PC-3 (cell line): ENCODE measurements at regions of chr2 and their contacts with region 1.

Region 1: DNA sequence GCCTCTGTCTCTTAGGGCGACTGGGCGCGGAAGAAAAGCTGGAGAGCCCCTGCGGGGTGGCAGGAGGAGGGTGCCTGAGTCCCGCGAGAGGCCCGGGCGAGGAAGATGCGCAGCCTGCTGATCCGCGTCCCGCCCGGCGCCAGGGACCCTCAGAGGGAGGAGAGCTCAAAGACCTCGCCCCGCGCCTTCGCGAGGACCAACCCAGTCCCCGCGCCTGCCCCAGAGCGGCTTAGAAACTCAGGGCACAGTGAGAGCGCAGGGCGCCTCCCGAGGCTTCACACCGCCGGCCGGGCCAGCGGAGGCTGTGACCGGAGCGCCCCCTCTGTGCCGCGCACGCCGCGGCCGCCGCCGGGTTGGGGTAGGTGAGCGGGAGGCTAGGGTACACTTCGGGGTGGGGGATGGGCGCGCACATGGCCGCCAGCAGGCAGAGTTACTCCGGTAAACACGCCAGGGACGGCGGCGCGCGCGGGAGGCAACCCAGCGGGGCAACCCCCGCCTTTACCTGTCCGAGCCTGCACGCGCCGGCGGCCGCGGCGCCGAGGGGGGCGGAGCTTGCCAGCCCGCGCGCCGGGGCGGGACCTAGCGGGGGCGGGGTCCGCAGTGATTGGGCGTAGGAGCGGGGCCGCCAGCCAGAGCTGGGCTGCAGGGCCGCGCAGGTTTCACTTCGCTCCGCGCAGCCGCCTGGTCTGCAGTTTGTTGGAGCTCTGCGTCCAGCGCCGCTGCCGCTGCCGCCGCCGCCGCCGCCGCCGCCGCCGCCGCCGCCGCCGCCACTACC is at the start of gene BCL2L11:
- DNase-seq: peak; percentile 95
- ATAC-seq: peak; percentile 67
- H3K4me3 ChIP-seq: peak within 1 kb of the TSS; percentile 91
- H3K27ac ChIP-seq: peak within 1 kb of the TSS; percentile 60
- H3K4me1 ChIP-seq: peaks cover 16% of the 10 kb centered on the region
- H3K27me3 ChIP-seq: no peaks in the 10 kb centered on the region
- CTCF ChIP-seq: peak; percentile 47
- total RNA-seq, gene BCL2L11: 11.3 and 24.6 TPM in 2 replicates

Region 2: GRCh38 chr2:110812726-110813645 is 307.5 kb before region 1 on chr2:
- CTCF ChIA-PET with region 1: no interaction called
- POLR2A ChIA-PET with region 1: interaction called, 5 read pairs
- intact Hi-C with region 1: loop called (anchors 2 kb)
- DNase-seq: no peak
- ATAC-seq: no peak
- H3K4me3 ChIP-seq: no peak overlapping the region
- H3K27ac ChIP-seq: no peak overlapping the region
- H3K4me1 ChIP-seq: peaks cover 2% of the 10 kb centered on the region; the same call in 1 of the 2 replicates
- H3K27me3 ChIP-seq: no peaks in the 10 kb centered on the region
- CTCF ChIP-seq: no peak

Region 3: GRCh38 chr2:111028727-111029126 is 91.7 kb before region 1 on chr2:
- CTCF ChIA-PET with region 1: interaction called, 3 read pairs
- POLR2A ChIA-PET with region 1: no interaction called
- intact Hi-C with region 1: loop called (anchors 1 kb)
- DNase-seq: peak; percentile 45
- ATAC-seq: peak; percentile 38; the same call in 1 of the 2 replicates
- H3K4me3 ChIP-seq: no peak overlapping the region
- H3K27ac ChIP-seq: no peak overlapping the region
- H3K4me1 ChIP-seq: peaks cover 44% of the 10 kb centered on the region
- H3K27me3 ChIP-seq: no peaks in the 10 kb centered on the region
- CTCF ChIP-seq: peak; percentile 78

Region 4: DNA sequence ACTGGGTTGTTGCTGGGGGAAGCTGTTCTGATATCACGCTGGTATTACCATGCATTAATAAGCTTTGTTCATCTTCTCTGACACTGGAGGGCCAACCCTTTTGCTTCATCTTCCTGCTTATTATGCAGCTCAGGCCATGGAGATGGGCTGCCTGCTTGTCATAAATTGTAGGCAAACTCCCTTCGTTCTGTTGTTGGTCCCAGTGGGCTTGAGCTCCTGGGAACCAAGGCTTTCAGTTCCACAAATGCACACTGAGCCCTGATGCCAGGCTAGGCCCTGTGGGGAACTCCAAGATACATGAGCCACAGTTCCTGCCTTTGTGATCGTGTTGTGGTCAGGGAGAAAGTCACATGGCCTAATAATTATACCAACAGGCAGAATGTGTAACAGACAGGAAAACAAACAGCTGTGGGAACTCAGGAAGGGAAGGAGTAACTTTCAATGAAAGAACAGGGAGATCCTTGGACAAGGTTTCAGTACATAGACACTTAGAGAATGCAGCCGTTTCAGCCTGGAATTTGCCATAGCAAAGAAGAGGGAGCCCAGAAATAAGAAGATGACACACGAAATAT is 48.8 kb before region 1 on chr2:
- CTCF ChIA-PET with region 1: no interaction called
- POLR2A ChIA-PET with region 1: interaction called, 6 read pairs
- intact Hi-C with region 1: loop called (anchors 2 kb)
- DNase-seq: peak; percentile 79
- ATAC-seq: peak; percentile 85
- H3K4me3 ChIP-seq: peak overlapping the region; percentile 29; the same call in 1 of the 2 replicates
- H3K27ac ChIP-seq: peak overlapping the region; percentile 93
- H3K4me1 ChIP-seq: peaks cover 42% of the 10 kb centered on the region
- H3K27me3 ChIP-seq: no peaks in the 10 kb centered on the region
- CTCF ChIP-seq: no peak

Region 5: DNA sequence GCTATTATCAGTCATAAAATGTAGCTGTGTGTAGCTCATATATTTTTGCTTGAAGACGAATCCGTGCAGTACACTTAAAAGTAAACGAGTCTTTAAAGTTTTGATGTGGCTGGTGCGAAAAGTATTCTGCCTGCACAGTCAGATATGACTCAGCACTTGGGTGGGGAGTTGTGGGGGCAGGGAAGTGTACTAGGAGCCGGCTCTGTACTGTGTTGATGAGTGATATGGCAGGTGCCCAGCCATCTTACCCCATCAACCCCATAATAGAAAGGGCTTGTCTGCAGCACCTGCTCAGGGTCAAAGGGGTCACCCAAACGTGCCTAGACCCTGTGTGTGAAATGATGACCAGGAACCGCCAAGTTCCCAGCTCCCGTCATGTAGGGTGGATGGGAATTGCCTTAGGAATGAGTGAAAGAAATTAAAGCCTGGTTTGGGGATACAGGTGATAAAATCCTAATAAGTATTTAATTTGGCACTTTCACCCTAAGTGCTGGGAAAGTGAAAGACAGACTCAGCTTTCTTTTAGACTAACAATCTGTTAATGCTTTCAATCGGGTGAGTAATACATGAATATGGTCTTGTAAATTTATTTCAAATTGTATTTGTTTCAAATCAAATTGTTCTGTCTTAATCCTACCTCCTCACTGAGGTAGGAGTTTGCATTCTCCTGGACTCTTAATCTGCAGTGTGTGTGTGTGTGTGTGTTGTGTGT is 48.2 kb after region 1 on chr2:
- CTCF ChIA-PET with region 1: no interaction called
- POLR2A ChIA-PET with region 1: interaction called, 14 read pairs
- intact Hi-C with region 1: no loop called
- DNase-seq: peak; percentile 94
- ATAC-seq: peak; percentile 96
- H3K4me3 ChIP-seq: no peak overlapping the region
- H3K27ac ChIP-seq: peak overlapping the region; percentile 43
- H3K4me1 ChIP-seq: peaks cover 31% of the 10 kb centered on the region
- H3K27me3 ChIP-seq: no peaks in the 10 kb centered on the region
- CTCF ChIP-seq: no peak

Region 6: GRCh38 chr2:111185638-111186022 is 65.2 kb after region 1 on chr2:
- CTCF ChIA-PET with region 1: no interaction called
- POLR2A ChIA-PET with region 1: no interaction called
- intact Hi-C with region 1: loop called (anchors 10 kb)
- DNase-seq: peak; percentile 68
- ATAC-seq: peak; percentile 97
- H3K4me3 ChIP-seq: no peak overlapping the region
- H3K27ac ChIP-seq: no peak overlapping the region
- H3K4me1 ChIP-seq: peaks cover 14% of the 10 kb centered on the region
- H3K27me3 ChIP-seq: no peaks in the 10 kb centered on the region
- CTCF ChIP-seq: no peak

Region 7: GRCh38 chr2:111227716-111228141 is 107.3 kb after region 1 on chr2:
- CTCF ChIA-PET with region 1: no interaction called
- POLR2A ChIA-PET with region 1: no interaction called
- intact Hi-C with region 1: no loop called
- DNase-seq: peak; percentile 37
- ATAC-seq: no peak
- H3K4me3 ChIP-seq: no peak overlapping the region
- H3K27ac ChIP-seq: no peak overlapping the region
- H3K4me1 ChIP-seq: no peaks in the 10 kb centered on the region
- H3K27me3 ChIP-seq: no peaks in the 10 kb centered on the region
- CTCF ChIP-seq: no peak

Region 8: GRCh38 chr2:111239107-111239506 is 118.7 kb after region 1 on chr2:
- CTCF ChIA-PET with region 1: no interaction called
- POLR2A ChIA-PET with region 1: no interaction called
- intact Hi-C with region 1: no loop called
- DNase-seq: no peak
- ATAC-seq: no peak
- H3K4me3 ChIP-seq: no peak overlapping the region
- H3K27ac ChIP-seq: no peak overlapping the region
- H3K4me1 ChIP-seq: no peaks in the 10 kb centered on the region
- H3K27me3 ChIP-seq: no peaks in the 10 kb centered on the region
- CTCF ChIP-seq: no peak

Region 9: GRCh38 chr2:111698743-111699554 is 578.5 kb after region 1 on chr2:
- CTCF ChIA-PET with region 1: no interaction called
- POLR2A ChIA-PET with region 1: no interaction called
- intact Hi-C with region 1: loop called (anchors 2 kb)
- DNase-seq: peak; percentile 98
- ATAC-seq: peak; percentile 97
- H3K4me3 ChIP-seq: peak overlapping the region; percentile 18; the same call in 1 of the 2 replicates
- H3K27ac ChIP-seq: peak overlapping the region; percentile 87
- H3K4me1 ChIP-seq: peaks cover 49% of the 10 kb centered on the region
- H3K27me3 ChIP-seq: no peaks in the 10 kb centered on the region
- CTCF ChIP-seq: peak; percentile 78

Region 10: DNA sequence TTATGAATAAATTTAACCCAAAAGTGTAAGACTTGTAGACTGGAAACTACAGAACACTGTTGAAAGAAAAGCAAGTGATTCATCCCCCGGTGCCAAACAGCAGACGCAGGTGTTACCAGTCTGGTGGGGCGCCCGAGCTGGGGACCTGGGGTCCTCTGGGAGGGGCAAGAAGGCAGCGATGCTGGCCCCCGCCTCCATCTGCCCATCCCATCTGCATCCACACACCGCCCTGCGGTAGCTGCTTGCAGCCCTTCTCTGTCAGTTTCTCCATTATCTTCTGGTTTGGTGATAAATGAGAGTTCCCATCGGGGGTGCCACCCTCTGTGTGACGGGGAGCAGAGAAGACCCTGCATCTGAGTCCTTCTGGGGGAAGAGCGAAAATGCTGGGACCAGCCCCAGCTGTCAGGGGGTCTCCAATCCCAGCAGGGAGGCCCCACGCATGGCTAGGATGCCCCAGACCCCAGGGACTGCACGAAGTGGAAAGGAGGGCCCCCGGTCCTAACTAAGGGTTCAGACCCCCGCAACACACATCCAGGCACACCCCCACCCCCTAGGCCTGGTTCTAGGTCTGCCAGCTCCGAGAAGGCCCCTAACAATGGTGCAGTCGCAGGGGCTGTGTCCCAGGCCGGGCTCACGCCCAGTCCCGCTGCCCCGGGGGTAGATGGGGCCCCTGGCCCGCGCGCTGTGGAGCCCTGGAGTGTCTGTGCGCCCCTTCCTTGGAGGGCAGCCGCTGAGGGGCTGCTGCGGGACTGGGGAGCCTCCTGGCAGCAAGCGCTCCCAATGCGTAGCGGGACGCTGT is 1313.7 kb after region 1 on chr2:
- CTCF ChIA-PET with region 1: no interaction called
- POLR2A ChIA-PET with region 1: no interaction called
- intact Hi-C with region 1: no loop called
- DNase-seq: no peak
- ATAC-seq: no peak
- H3K4me3 ChIP-seq: no peak overlapping the region
- H3K27ac ChIP-seq: no peak overlapping the region
- H3K4me1 ChIP-seq: no peaks in the 10 kb centered on the region
- H3K27me3 ChIP-seq: no peaks in the 10 kb centered on the region
- CTCF ChIP-seq: no peak